CD8-positive, alpha-beta T cell (primary cell): ENCODE measurements at regions of chr19 and their contacts with region 1.

Region 1: GRCh38 chr19:15091901-15092753 is 10.1 kb downstream of the OR1I1 start:
- DNase-seq: peak in 7 of 9 experiments; percentile 9 to 86 (median 67)
- ATAC-seq: peak; percentile 49
- H3K4me3 ChIP-seq: no peak overlapping the region
- H3K4me3 Mint-ChIP-seq: no peak overlapping the region
- H3K27ac ChIP-seq: no peak overlapping the region
- H3K27ac Mint-ChIP-seq: no peak overlapping the region
- H3K4me1 ChIP-seq: peaks cover 5% of the 10 kb centered on the region
- H3K4me1 Mint-ChIP-seq: peaks cover 4% of the 10 kb centered on the region
- H3K27me3 ChIP-seq: no peaks in the 10 kb centered on the region
- H3K27me3 Mint-ChIP-seq: peaks cover 10% of the 10 kb centered on the region
- CTCF ChIP-seq: peak; percentile 70

Region 2: DNA sequence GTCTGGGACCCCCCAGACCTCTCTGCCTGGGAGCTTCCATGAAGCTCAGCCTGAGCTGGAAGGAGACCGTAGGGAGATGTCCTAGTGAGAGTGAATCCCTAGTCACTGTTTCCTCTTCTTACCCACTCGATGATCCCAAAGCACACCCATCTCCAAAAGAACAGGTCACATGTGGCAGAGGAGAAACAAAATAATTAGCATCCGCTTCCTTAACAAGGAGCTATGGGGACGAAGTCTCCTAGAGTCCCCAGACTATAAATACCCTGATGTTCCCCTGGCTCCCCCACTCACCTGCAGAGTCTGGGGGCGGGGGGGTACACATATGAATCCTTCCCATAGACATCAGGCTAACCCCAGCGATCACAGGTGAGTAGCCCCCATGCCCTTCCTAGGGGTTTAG is 10.2 kb before region 1 on chr19 and contains the start of gene OR1I1:
- CTCF ChIA-PET with region 1: interaction called, 22 read pairs
- POLR2A ChIA-PET with region 1: no interaction called
- intact Hi-C with region 1: no loop called
- DNase-seq: no peak
- ATAC-seq: no peak
- H3K4me3 ChIP-seq: no peak within 1 kb of the TSS
- H3K4me3 Mint-ChIP-seq: no peak within 1 kb of the TSS
- H3K27ac ChIP-seq: no peak within 1 kb of the TSS
- H3K27ac Mint-ChIP-seq: no peak within 1 kb of the TSS
- H3K4me1 ChIP-seq: no peaks in the 10 kb centered on the region
- H3K4me1 Mint-ChIP-seq: no peaks in the 10 kb centered on the region
- H3K27me3 ChIP-seq: no peaks in the 10 kb centered on the region
- H3K27me3 Mint-ChIP-seq: peaks cover 32% of the 10 kb centered on the region
- CTCF ChIP-seq: no peak
- total RNA-seq, gene OR1I1: not detected

Region 3: GRCh38 chr19:15125232-15126067 is 33.3 kb after region 1 on chr19:
- CTCF ChIA-PET with region 1: interaction called, 11 read pairs
- POLR2A ChIA-PET with region 1: no interaction called
- intact Hi-C with region 1: loop called in 1 of 2 experiments (anchors 2 kb)
- DNase-seq: peak; percentile 94 to 99 (median 97)
- ATAC-seq: peak; percentile 85
- H3K4me3 ChIP-seq: peak overlapping the region; percentile 98 to 99
- H3K4me3 Mint-ChIP-seq: peak overlapping the region; percentile 99
- H3K27ac ChIP-seq: peak overlapping the region; percentile 91 to 98
- H3K27ac Mint-ChIP-seq: peak overlapping the region; percentile 98
- H3K4me1 ChIP-seq: peaks cover 34% of the 10 kb centered on the region
- H3K4me1 Mint-ChIP-seq: peaks cover 47% of the 10 kb centered on the region
- H3K27me3 ChIP-seq: no peaks in the 10 kb centered on the region
- H3K27me3 Mint-ChIP-seq: no peaks in the 10 kb centered on the region
- CTCF ChIP-seq: no peak

Region 4: DNA sequence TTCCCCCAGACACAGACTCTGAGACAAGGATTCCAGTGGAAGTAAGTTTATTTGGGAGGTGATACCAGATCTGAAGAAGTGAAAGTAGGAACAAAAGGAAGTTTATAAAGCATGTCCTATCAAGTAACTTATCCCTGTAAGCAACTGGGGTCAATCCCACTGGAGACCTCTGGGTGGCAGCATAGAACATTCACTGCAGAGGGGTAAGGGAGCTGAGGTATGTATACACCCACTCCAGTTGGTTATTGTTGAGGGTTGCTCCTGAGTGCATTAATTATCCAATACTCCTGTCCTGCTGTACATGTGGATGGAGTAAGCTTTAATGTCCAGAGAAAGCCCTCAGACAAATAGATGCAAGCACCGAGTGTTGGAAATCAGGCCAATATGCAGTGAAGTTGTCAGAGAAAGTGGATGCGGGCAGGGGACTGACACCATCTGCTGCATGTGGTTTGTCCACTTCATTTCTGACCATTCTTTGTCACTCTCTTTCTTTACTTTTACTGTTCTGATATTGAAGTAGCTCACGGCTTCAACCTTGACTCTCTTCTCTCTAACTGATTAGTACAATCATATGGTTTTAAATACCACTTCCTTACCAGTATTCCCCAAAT is 62.0 kb after region 1 on chr19:
- CTCF ChIA-PET with region 1: interaction called, 116 read pairs
- POLR2A ChIA-PET with region 1: no interaction called
- intact Hi-C with region 1: loop called (anchors 1 kb)
- DNase-seq: peak in 4 of 9 experiments; percentile 27 to 51 (median 36)
- ATAC-seq: peak; percentile 61
- H3K4me3 ChIP-seq: no peak overlapping the region
- H3K4me3 Mint-ChIP-seq: no peak overlapping the region
- H3K27ac ChIP-seq: no peak overlapping the region
- H3K27ac Mint-ChIP-seq: no peak overlapping the region
- H3K4me1 ChIP-seq: no peaks in the 10 kb centered on the region
- H3K4me1 Mint-ChIP-seq: peaks cover 4% of the 10 kb centered on the region
- H3K27me3 ChIP-seq: no peaks in the 10 kb centered on the region
- H3K27me3 Mint-ChIP-seq: peaks cover 15% of the 10 kb centered on the region
- CTCF ChIP-seq: peak; percentile 48

Region 5: GRCh38 chr19:15161028-15161989 is 69.2 kb after region 1 on chr19:
- CTCF ChIA-PET with region 1: interaction called, 11 read pairs
- POLR2A ChIA-PET with region 1: no interaction called
- intact Hi-C with region 1: no loop called
- DNase-seq: peak in 2 of 9 experiments; percentile 24
- ATAC-seq: no peak
- H3K4me3 ChIP-seq: no peak overlapping the region
- H3K4me3 Mint-ChIP-seq: no peak overlapping the region
- H3K27ac ChIP-seq: no peak overlapping the region
- H3K27ac Mint-ChIP-seq: no peak overlapping the region
- H3K4me1 ChIP-seq: no peaks in the 10 kb centered on the region
- H3K4me1 Mint-ChIP-seq: no peaks in the 10 kb centered on the region
- H3K27me3 ChIP-seq: no peaks in the 10 kb centered on the region
- H3K27me3 Mint-ChIP-seq: no peaks in the 10 kb centered on the region
- CTCF ChIP-seq: no peak

Region 6: GRCh38 chr19:15264061-15264932 is 172.2 kb after region 1 on chr19:
- CTCF ChIA-PET with region 1: no interaction called
- POLR2A ChIA-PET with region 1: no interaction called
- intact Hi-C with region 1: loop called in 1 of 2 experiments (anchors 5 kb)
- DNase-seq: peak; percentile 46 to 82 (median 72)
- ATAC-seq: peak; percentile 71
- H3K4me3 ChIP-seq: no peak overlapping the region
- H3K4me3 Mint-ChIP-seq: no peak overlapping the region
- H3K27ac ChIP-seq: no peak overlapping the region
- H3K27ac Mint-ChIP-seq: no peak overlapping the region
- H3K4me1 ChIP-seq: no peaks in the 10 kb centered on the region
- H3K4me1 Mint-ChIP-seq: peaks cover 3% of the 10 kb centered on the region
- H3K27me3 ChIP-seq: no peaks in the 10 kb centered on the region
- H3K27me3 Mint-ChIP-seq: no peaks in the 10 kb centered on the region
- CTCF ChIP-seq: peak; percentile 70